ENCODE measurements at regions of chr12 and their contacts with region 1.

Region 1: GRCh38 chr12:106986625-106987430 is at the start of gene MTERF2:
- DNase-seq: peak; percentile 85
- ATAC-seq: peak; percentile 98
- H3K4me3 ChIP-seq: peak within 1 kb of the TSS; percentile 80 to 91 (median 85)
- H3K4me3 Mint-ChIP-seq: peak within 1 kb of the TSS; percentile 95
- H3K27ac ChIP-seq: peak within 1 kb of the TSS; percentile 5 to 28
- H3K27ac Mint-ChIP-seq: peak within 1 kb of the TSS; percentile 77
- H3K4me1 ChIP-seq: peaks cover 13 to 16% of the 10 kb centered on the region in 2 donors
- H3K4me1 Mint-ChIP-seq: peaks cover 28% of the 10 kb centered on the region
- H3K27me3 ChIP-seq: no peaks in the 10 kb centered on the region
- H3K27me3 Mint-ChIP-seq: no peaks in the 10 kb centered on the region
- CTCF ChIP-seq: no peak
- total RNA-seq, gene MTERF2: 7.1 and 9.4 TPM in 2 replicates

Region 2: DNA sequence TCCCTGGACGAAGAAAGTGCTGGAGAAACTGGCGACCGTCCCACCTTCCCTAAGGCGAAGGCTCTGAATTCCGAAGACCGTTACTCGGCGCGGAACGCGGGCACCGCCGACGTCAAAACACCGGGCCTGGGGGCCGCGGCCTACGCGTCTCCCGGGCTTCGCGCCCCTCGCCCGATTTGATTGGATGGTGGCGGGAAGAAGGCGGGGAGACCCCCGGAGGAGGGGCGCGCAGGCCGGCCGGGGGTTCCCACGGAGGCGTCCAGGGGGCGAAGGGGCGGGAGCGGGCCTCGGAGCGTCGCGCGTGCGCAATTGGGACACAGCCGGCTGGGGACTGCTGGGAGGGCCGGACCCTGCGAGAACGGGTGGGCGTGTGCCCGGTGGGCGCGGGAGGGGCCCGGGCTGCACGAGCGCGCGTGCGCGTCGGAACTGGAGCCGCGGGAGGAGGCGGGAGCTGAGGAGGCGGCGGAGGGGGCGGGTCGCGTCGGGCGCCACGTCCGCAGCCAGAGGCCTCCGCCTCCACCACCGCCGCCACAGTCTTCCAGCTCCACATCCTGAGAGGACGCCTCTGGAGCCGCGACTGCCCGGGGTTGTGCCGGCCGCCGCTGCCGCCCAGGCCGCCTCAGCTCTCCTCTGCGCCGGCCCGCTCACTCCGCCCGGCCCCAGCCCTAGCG is 31.3 kb before region 1 on chr12 and contains the start of gene TMEM263:
- CTCF ChIA-PET with region 1: no interaction called
- POLR2A ChIA-PET with region 1: interaction called, 4 read pairs
- intact Hi-C with region 1: loop called (anchors 1 kb)
- DNase-seq: peak; percentile 94
- ATAC-seq: peak; percentile 84
- H3K4me3 ChIP-seq: peak within 1 kb of the TSS; percentile 67 to 89 (median 88)
- H3K4me3 Mint-ChIP-seq: peak within 1 kb of the TSS; percentile 99
- H3K27ac ChIP-seq: peak within 1 kb of the TSS; percentile 49 to 57
- H3K27ac Mint-ChIP-seq: peak within 1 kb of the TSS; percentile 93
- H3K4me1 ChIP-seq: peaks cover 9 to 12% of the 10 kb centered on the region in 2 donors
- H3K4me1 Mint-ChIP-seq: peaks cover 20% of the 10 kb centered on the region
- H3K27me3 ChIP-seq: no peaks in the 10 kb centered on the region
- H3K27me3 Mint-ChIP-seq: no peaks in the 10 kb centered on the region
- CTCF ChIP-seq: no peak
- total RNA-seq, gene TMEM263: 23.5 and 26.7 TPM in 2 replicates

Region 3: DNA sequence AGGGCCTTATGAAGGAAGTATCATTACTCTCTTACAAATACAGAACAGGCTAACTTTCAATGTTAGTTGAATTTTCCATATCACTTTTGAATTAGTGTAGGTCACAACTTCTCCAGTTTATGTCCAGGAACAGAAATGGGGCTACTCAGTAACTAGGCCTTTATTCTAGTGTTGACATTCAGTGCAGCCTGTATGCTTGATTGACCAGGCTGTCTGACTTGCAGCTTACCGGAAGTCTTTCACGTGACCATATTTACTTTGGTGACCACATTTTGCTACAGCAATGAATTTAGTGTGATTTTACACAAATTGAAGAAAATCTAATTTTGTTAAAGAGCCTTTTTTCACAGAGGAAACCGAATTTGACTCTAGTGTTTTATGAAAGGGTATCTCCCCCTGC is 12.3 kb before region 1 on chr12:
- CTCF ChIA-PET with region 1: no interaction called
- POLR2A ChIA-PET with region 1: no interaction called
- intact Hi-C with region 1: loop called (anchors 1 kb)
- DNase-seq: peak; percentile 29
- ATAC-seq: peak; percentile 47
- H3K4me3 ChIP-seq: no peak overlapping the region
- H3K4me3 Mint-ChIP-seq: peak overlapping the region; percentile 24
- H3K27ac ChIP-seq: no peak overlapping the region
- H3K27ac Mint-ChIP-seq: peak overlapping the region; percentile 60
- H3K4me1 ChIP-seq: peaks cover 7 to 10% of the 10 kb centered on the region in 2 donors
- H3K4me1 Mint-ChIP-seq: peaks cover 15% of the 10 kb centered on the region
- H3K27me3 ChIP-seq: no peaks in the 10 kb centered on the region
- H3K27me3 Mint-ChIP-seq: no peaks in the 10 kb centered on the region
- CTCF ChIP-seq: no peak

Region 4: GRCh38 chr12:108305520-108305919 is 1318.7 kb after region 1 on chr12:
- CTCF ChIA-PET with region 1: no interaction called
- POLR2A ChIA-PET with region 1: no interaction called
- intact Hi-C with region 1: no loop called
- DNase-seq: no peak
- ATAC-seq: no peak
- H3K4me3 ChIP-seq: no peak overlapping the region
- H3K4me3 Mint-ChIP-seq: no peak overlapping the region
- H3K27ac ChIP-seq: no peak overlapping the region
- H3K27ac Mint-ChIP-seq: no peak overlapping the region
- H3K4me1 ChIP-seq: no peaks in the 10 kb centered on the region
- H3K4me1 Mint-ChIP-seq: no peaks in the 10 kb centered on the region
- H3K27me3 ChIP-seq: peaks cover 0 to 11% (median 0%) of the 10 kb centered on the region in 4 experiments
- H3K27me3 Mint-ChIP-seq: peaks cover 22% of the 10 kb centered on the region
- CTCF ChIP-seq: no peak